Cardiac septum (tissue), 1 donor: ENCODE measurements at regions of chr1 and their contacts with region 1.

Region 1: GRCh38 chr1:94926915-94927404 is at the start of gene CNN3:
- DNase-seq: peak; percentile 93
- total RNA-seq, gene CNN3: 106 TPM

Region 2: GRCh38 chr1:94854458-94855306 is 72.3 kb before region 1 on chr1:
- intact Hi-C with region 1: loop called (anchors 1 kb)
- DNase-seq: peak; percentile 93

Region 3: DNA sequence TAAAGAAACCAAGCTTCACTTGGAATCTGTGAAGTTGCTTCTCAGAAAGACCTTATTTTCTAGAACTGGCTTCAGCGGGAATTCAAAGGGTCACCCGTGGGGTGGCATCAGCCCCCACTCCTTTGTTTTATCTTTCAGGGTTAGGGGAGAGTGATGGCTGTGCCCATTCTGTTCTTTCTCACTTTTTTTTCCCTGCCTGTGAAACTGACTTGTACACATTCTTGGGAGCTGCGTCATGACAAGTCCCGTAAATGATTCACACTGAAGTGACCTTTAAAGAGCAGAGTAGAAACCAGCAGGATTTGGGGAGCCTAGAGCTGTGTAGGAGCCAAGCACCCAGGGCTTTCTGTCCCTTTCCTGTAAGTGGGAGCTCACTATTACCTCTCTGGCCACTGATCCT is 63.0 kb before region 1 on chr1:
- intact Hi-C with region 1: loop called (anchors 2 kb)
- DNase-seq: no peak

Region 4: GRCh38 chr1:94955767-94956632 is 29.0 kb after region 1 on chr1:
- intact Hi-C with region 1: loop called (anchors 2 kb)
- DNase-seq: no peak

Region 5: GRCh38 chr1:95023399-95024043 is 96.6 kb after region 1 on chr1:
- intact Hi-C with region 1: loop called (anchors 5 kb)
- DNase-seq: no peak

Region 6: GRCh38 chr1:95043141-95043980 is 116.4 kb after region 1 on chr1:
- intact Hi-C with region 1: loop called (anchors 2 kb)
- DNase-seq: peak; percentile 91